ENCODE measurements at regions of chr11 and their contacts with region 1.

Region 1: GRCh38 chr11:79263001-79263400 is 177.8 kb downstream of the TENM4 start:
- DNase-seq: no peak
- H3K4me3 ChIP-seq: no peak overlapping the region
- H3K4me3 Mint-ChIP-seq: no peak overlapping the region
- H3K27ac Mint-ChIP-seq: no peak overlapping the region
- H3K4me1 ChIP-seq: 0 out of 2 replicates have a peak, but pooled peaks cover 4% of the 10 kb centered on the region
- H3K4me1 Mint-ChIP-seq: no peaks in the 10 kb centered on the region
- H3K27me3 ChIP-seq: no peaks in the 10 kb centered on the region
- H3K27me3 Mint-ChIP-seq: peaks cover 9% of the 10 kb centered on the region
- CTCF ChIP-seq: no peak

Region 2: GRCh38 chr11:79087238-79087960 is 175.6 kb before region 1 on chr11:
- CTCF ChIA-PET with region 1: interaction called, 14 read pairs
- POLR2A ChIA-PET with region 1: no interaction called
- intact Hi-C with region 1: no loop called
- DNase-seq: peak; percentile 72 to 84
- H3K4me3 ChIP-seq: no peak overlapping the region
- H3K4me3 Mint-ChIP-seq: peak overlapping the region; percentile 15
- H3K27ac Mint-ChIP-seq: peak overlapping the region; percentile 89
- H3K4me1 ChIP-seq: peaks cover 40% of the 10 kb centered on the region
- H3K4me1 Mint-ChIP-seq: peaks cover 28% of the 10 kb centered on the region
- H3K27me3 ChIP-seq: no peaks in the 10 kb centered on the region
- H3K27me3 Mint-ChIP-seq: no peaks in the 10 kb centered on the region
- CTCF ChIP-seq: no peak

Measured in Caco-2 (cell line).